ENCODE measurements at regions of chr2 and their contacts with region 1.

Region 1: DNA sequence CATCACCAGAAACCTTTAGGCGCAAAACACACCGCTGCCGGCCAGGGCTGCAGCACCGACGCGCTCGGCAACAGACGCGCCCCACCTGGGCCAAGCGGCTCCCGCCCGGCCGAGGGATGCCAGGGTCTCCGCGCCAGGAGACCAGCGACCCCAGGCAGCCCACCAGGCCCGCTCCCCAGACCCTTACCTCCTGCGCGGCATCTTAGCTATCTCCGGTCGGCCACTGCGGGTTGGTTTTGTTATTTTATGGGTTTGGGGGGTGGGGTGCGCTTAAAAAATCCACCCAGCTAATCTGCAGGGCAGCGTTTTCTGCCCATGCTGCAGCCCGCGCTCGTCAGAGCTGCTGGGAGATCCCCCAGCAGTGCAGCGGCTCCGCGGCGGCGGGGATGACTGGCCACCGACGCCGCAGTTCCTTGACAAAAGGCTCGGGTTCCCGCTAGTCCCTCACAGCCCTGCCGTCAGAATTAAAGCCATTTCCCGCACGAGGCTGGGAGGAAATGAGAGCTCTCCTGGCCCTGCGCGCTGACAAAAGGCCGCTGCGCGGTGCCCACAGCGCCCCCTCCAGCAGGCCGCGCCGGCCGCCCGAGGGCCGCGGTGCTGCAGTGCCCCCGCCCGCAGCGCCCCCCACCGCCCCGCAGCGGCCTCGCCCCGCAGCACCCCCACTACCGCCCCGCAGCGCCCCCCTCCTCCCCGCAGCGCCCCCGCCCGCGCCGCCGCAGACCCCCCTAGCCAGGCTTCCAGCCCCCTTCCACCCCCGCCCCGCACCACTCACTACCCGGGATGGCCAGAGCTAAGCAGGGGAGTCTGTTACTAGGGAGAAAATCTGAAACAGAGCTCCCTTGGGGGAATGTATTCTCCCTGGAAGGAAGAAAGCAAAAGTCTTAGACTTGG is at the start of gene ADD2:
- DNase-seq: peak; percentile 79
- ATAC-seq: peak; percentile 80
- H3K4me3 Mint-ChIP-seq: peak within 1 kb of the TSS; percentile 85
- H3K27ac Mint-ChIP-seq: peak within 1 kb of the TSS; percentile 84
- H3K4me1 Mint-ChIP-seq: peaks cover 9% of the 10 kb centered on the region
- H3K27me3 Mint-ChIP-seq: peaks cover 30% of the 10 kb centered on the region
- CTCF ChIP-seq: peak; percentile 44
- total RNA-seq, gene ADD2: 24.5 to 26.3 TPM

Region 2: DNA sequence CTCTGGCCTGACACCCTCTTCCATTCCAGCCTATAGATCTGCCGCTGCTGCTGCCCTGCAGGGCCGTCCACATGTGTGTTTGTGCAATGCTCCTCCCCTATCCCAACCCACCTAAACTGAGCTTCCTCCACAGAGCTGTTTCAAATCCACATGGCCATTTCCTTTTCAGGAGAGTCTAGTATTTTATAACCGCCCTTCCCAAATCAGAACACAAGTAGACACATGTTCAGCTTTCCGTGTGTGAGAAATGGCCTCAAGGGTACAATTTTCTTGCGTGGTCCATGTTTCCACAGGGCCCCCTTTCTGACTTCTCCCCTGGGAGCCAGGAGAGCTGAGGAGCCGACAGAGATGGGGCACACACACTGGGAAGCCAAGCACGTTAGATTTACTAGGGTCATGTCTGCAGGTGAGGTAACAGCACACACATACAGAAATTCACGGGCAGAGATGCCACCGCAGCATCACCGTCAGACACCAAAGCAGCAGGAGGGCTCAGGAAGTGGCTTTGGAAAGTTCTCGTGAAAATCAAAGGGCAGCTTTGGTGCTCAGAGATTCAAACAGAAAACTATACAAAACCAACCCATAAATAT is 111.4 kb before region 1 on chr2:
- CTCF ChIA-PET with region 1: interaction called, 17 read pairs
- POLR2A ChIA-PET with region 1: interaction called, 6 read pairs
- intact Hi-C with region 1: no loop called
- DNase-seq: peak; percentile 70
- ATAC-seq: peak; percentile 67
- H3K4me3 Mint-ChIP-seq: peak overlapping the region; percentile 27
- H3K27ac Mint-ChIP-seq: peak overlapping the region; percentile 61
- H3K4me1 Mint-ChIP-seq: peaks cover 34% of the 10 kb centered on the region
- H3K27me3 Mint-ChIP-seq: peaks cover 6% of the 10 kb centered on the region
- CTCF ChIP-seq: no peak

Region 3: DNA sequence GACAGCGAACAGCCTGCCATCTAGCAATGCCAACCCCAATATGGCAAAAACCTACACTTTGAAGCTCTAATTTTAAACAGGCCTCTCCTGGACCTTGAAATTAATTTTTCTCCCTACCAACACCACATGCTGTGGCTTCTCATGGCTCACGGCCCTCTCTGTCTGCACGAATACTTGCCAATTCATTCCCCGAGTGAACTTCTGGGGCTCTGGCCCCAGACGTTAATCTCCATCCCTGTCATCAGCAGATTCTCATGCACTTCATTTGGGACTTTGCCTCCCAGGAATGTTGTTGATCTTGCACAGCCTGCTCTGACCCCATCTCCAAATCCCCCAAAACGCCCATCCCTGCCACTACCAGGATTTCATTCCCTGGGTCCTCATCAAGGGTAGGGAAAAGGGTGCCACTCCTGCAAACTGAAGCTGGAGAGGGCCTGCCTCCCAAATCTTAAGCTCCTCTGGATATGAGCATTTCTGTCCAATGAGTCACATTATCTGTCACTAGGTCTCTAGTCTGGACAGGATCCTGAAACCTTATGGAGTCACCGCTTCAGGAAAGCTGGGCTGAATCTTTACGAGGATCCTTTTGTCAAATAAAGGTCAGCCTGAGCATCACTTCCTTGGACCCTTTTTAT is 12.1 kb after region 1 on chr2:
- CTCF ChIA-PET with region 1: interaction called, 16 read pairs
- POLR2A ChIA-PET with region 1: interaction called, 4 read pairs
- intact Hi-C with region 1: no loop called
- DNase-seq: no peak
- ATAC-seq: no peak
- H3K4me3 Mint-ChIP-seq: no peak overlapping the region
- H3K27ac Mint-ChIP-seq: no peak overlapping the region
- H3K4me1 Mint-ChIP-seq: peaks cover 1% of the 10 kb centered on the region
- H3K27me3 Mint-ChIP-seq: peaks cover 9% of the 10 kb centered on the region
- CTCF ChIP-seq: no peak